ENCODE measurements at regions of chr11 and their contacts with region 1.

Region 1: GRCh38 chr11:102733232-102733875 is 8.6 kb upstream of the MMP8 start:
- DNase-seq: peak; percentile 60
- H3K4me3 ChIP-seq: no peak overlapping the region
- H3K27ac ChIP-seq: no peak overlapping the region
- H3K4me1 ChIP-seq: peaks cover 3% of the 10 kb centered on the region
- H3K27me3 ChIP-seq: no peaks in the 10 kb centered on the region
- CTCF ChIP-seq: peak; percentile 96 to 98

Region 2: DNA sequence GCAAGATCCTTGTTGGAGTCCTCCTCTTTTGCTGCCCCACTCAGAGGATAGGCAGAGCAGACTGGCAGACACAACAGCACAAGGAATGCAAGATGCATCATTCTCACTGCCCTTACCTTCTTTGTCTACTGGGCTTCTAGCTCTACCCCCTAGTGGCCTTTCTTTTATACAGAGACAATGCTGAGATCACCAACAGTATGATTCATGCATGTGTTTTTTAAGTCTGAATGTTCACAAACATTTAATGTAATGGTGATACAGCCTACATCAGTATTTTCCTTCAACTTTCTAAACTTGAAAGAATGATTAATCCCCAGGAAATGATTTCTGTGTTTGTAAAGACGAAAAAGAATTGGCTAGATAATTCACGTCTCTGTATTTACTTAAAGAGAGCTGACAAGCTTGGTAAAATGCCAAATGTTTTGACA is 47.2 kb after region 1 on chr11 and contains the start of gene MMP10:
- CTCF ChIA-PET with region 1: no interaction called
- dilution Hi-C with region 1: no loop called
- in situ Hi-C with region 1: no loop called
- intact Hi-C with region 1: loop called (anchors 1 kb)
- DNase-seq: peak; percentile 88
- H3K4me3 ChIP-seq: no peak within 1 kb of the TSS
- H3K27ac ChIP-seq: no peak within 1 kb of the TSS
- H3K4me1 ChIP-seq: peaks cover 26% of the 10 kb centered on the region
- H3K27me3 ChIP-seq: no peaks in the 10 kb centered on the region
- CTCF ChIP-seq: peak; percentile 71 to 76
- total RNA-seq, gene MMP10: 2.5 to 30.6 TPM

Region 3: DNA sequence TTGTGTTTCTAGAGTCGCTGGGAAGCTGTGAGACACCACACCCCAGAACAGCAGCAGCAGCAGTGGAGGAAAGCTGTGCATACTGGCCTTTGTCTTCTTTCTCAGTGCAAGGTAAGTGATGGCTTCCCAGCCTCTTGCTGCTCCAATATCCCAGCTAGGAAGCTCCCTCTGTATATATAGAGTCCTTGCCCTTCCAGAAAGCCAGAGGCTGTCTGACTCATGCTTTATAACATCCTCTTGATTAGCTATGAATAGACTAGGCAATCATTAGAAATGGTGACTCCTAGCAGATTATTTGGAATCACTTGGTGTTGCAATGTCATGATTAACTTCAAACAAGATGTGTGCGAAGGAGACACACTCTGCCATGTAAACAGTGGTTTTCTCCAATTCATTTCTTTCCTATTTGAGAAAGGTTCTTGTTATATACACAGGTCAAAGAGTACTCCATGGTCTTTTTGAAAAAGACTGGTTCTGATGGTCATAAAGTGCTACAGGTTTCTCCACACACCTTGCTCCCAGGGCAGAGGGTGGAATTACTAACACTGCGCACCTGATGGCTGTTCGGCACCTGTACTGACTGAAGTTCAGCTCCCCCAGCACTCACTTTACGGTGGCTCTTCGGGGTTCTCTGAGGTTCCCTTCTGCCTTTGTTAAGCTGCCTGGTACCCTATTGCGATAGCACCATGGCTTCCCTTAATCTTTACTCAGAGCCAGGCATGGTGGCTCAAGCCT is 64.8 kb after region 1 on chr11 and contains the start of gene MMP1:
- CTCF ChIA-PET with region 1: no interaction called
- dilution Hi-C with region 1: no loop called
- in situ Hi-C with region 1: no loop called
- intact Hi-C with region 1: loop called (anchors 5 kb)
- DNase-seq: peak; percentile 86
- H3K4me3 ChIP-seq: no peak within 1 kb of the TSS
- H3K27ac ChIP-seq: no peak within 1 kb of the TSS
- H3K4me1 ChIP-seq: peaks cover 11% of the 10 kb centered on the region
- H3K27me3 ChIP-seq: no peaks in the 10 kb centered on the region
- CTCF ChIP-seq: no peak
- total RNA-seq, gene MMP1: 1.7 to 70.5 TPM

Region 4: GRCh38 chr11:102914238-102915043 is 181.1 kb after region 1 on chr11:
- CTCF ChIA-PET with region 1: interaction called, 3 read pairs
- dilution Hi-C with region 1: no loop called
- in situ Hi-C with region 1: no loop called
- intact Hi-C with region 1: loop called (anchors 1 kb)
- DNase-seq: peak; percentile 28
- H3K4me3 ChIP-seq: no peak overlapping the region
- H3K27ac ChIP-seq: no peak overlapping the region
- H3K4me1 ChIP-seq: peaks cover 13% of the 10 kb centered on the region
- H3K27me3 ChIP-seq: no peaks in the 10 kb centered on the region
- CTCF ChIP-seq: peak; percentile 74 to 85

Region 5: GRCh38 chr11:102940714-102941588 is 207.6 kb after region 1 on chr11:
- CTCF ChIA-PET with region 1: interaction called, 5 read pairs
- dilution Hi-C with region 1: no loop called
- in situ Hi-C with region 1: loop called (anchors 5 kb)
- intact Hi-C with region 1: loop called (anchors 1 kb)
- DNase-seq: peak; percentile 66
- H3K4me3 ChIP-seq: no peak overlapping the region
- H3K27ac ChIP-seq: no peak overlapping the region
- H3K4me1 ChIP-seq: peaks cover 3% of the 10 kb centered on the region
- H3K27me3 ChIP-seq: no peaks in the 10 kb centered on the region
- CTCF ChIP-seq: peak; percentile 68 to 74

Region 6: DNA sequence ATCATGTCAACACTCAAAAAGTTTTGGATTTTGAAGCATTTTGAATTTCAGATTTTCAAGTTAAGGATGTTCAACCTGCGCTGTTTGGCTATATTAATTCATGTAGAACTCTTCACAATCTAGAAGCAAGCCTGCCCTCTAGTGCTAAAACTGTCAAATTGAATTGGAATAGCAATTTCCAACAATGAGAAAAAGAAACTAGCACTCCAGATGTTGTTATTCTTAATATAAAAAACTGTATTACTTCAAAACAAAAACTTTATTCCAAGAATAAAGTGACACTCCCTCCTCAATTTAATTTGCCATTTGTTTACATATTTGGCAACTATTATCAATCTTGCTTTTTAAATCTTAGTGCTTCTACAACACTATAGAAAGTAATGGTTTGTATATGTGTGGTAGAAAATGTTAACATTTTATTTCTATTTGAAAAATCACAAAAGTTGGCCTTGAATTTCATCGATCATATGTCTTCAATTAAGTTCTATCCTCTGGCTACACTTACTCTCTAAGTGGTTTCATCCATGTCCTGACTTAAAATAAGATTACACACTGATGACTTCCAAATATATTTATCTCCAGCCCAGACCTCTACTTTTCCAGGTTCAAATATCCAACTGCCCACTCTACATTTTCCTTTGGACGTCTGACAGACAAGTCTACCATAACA is 322.0 kb after region 1 on chr11:
- CTCF ChIA-PET with region 1: no interaction called
- dilution Hi-C with region 1: no loop called
- in situ Hi-C with region 1: loop called in 1 of 2 experiments (anchors 10 kb)
- intact Hi-C with region 1: loop called (anchors 1 kb)
- DNase-seq: peak; percentile 33
- H3K4me3 ChIP-seq: no peak overlapping the region
- H3K27ac ChIP-seq: no peak overlapping the region
- H3K4me1 ChIP-seq: no peaks in the 10 kb centered on the region
- H3K27me3 ChIP-seq: no peaks in the 10 kb centered on the region
- CTCF ChIP-seq: peak; percentile 61 to 67